Activated CD4-positive, alpha-beta T cell treated with anti-CD3 and anti-CD28 coated beads for 36 hours (primary cell): ENCODE measurements at regions of chr1 and their contacts with region 1.

Region 1: GRCh38 chr1:160251687-160252526 is 10.4 kb downstream of the DCAF8 start:
- DNase-seq: peak; percentile 74
- ATAC-seq: peak; percentile 93
- H3K4me3 Mint-ChIP-seq: no peak overlapping the region
- H3K27ac Mint-ChIP-seq: no peak overlapping the region
- H3K4me1 Mint-ChIP-seq: peaks cover 14% of the 10 kb centered on the region
- H3K27me3 Mint-ChIP-seq: no peaks in the 10 kb centered on the region

Region 2: DNA sequence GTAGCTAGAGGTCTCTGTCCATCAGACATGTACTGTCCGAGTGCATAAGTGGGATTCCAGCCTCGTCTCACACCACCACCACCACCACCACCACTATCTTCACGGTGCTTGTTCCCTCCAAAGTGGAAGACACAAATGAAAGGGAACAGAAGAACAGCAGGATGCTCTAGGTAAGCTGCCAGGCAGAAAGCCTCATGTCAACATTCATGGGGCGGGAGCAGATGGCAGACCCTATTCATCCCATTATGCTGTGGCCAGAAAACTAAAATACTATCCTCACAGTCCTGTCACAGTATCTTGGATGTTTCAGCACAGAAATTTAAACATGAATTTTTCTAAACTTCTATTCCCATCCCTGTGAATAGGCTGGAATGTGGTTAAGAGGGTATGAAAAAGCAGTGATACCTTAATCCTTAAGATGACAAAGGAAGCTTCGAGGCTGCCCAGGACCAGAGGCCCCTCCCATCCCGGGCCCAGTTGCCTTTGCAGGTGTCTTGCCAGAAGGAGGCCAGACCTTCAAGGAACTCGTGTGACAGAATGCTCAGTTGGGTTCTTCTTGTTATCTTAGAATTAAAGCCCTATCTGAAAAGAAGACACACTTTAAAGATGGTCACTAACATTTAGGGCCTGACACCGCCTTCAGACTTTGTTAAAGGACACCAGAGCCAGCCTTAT is 639.6 kb before region 1 on chr1:
- CTCF ChIA-PET with region 1: no interaction called
- POLR2A ChIA-PET with region 1: no interaction called
- intact Hi-C with region 1: no loop called
- DNase-seq: no peak
- ATAC-seq: no peak
- H3K4me3 Mint-ChIP-seq: no peak overlapping the region
- H3K27ac Mint-ChIP-seq: no peak overlapping the region
- H3K4me1 Mint-ChIP-seq: no peaks in the 10 kb centered on the region
- H3K27me3 Mint-ChIP-seq: peaks cover 18% of the 10 kb centered on the region

Region 3: GRCh38 chr1:160085686-160086455 is 166.0 kb before region 1 on chr1:
- CTCF ChIA-PET with region 1: interaction called, 13 read pairs
- POLR2A ChIA-PET with region 1: no interaction called
- intact Hi-C with region 1: no loop called
- DNase-seq: peak; percentile 91
- ATAC-seq: peak; percentile 76
- H3K4me3 Mint-ChIP-seq: no peak overlapping the region
- H3K27ac Mint-ChIP-seq: no peak overlapping the region
- H3K4me1 Mint-ChIP-seq: peaks cover 12% of the 10 kb centered on the region
- H3K27me3 Mint-ChIP-seq: peaks cover 20% of the 10 kb centered on the region

Region 4: GRCh38 chr1:160193091-160193819 is 58.7 kb before region 1 on chr1:
- CTCF ChIA-PET with region 1: interaction called, 12 read pairs
- POLR2A ChIA-PET with region 1: no interaction called
- intact Hi-C with region 1: loop called (anchors 1 kb)
- DNase-seq: peak; percentile 90
- ATAC-seq: peak; percentile 89
- H3K4me3 Mint-ChIP-seq: no peak overlapping the region
- H3K27ac Mint-ChIP-seq: no peak overlapping the region
- H3K4me1 Mint-ChIP-seq: no peaks in the 10 kb centered on the region
- H3K27me3 Mint-ChIP-seq: no peaks in the 10 kb centered on the region

Region 5: DNA sequence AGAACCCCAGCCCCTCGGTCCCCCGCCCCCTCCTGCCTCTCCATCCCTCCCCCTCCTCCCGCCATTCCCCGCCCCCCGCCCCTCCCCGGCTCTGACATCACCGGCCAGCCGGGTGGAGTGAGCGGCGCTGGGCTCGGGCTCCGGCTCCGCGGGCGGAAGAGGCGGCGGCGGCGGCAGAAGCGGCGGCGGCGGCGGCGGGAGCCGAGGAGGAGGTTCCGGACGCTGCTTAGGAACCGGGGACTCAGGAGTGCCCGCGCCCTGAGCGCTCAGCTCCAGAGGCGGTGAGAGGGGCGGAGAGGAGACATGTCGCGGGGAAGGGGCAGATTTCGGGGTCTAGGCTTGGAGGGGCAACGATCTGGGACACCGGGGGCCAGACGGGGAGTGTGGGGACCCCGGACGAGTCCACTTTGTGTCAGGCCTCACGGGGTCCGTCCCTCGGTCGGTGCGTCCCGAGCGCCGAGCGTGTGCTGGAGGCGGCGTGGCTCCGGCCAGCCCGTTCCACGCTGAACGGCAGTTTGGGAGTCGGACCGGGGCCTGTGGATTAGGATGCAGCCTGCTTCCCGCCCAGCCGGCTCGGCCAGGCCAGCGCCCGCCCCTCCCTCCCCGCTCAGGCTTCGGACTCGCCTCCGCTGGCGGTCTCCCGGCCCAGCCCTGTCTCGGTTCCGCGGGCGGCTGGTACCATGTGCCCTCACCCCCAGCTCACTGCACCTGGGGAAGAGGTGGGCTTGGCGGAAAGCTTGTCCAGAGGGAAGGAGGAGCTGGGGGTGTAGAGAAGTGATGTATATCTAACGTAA is 46.5 kb before region 1 on chr1 and contains the start of gene PEA15:
- CTCF ChIA-PET with region 1: interaction called, 16 read pairs
- POLR2A ChIA-PET with region 1: no interaction called
- intact Hi-C with region 1: no loop called
- DNase-seq: peak; percentile 83
- ATAC-seq: peak; percentile 76
- H3K4me3 Mint-ChIP-seq: peak within 1 kb of the TSS; percentile 81
- H3K27ac Mint-ChIP-seq: peak within 1 kb of the TSS; percentile 86
- H3K4me1 Mint-ChIP-seq: peaks cover 47% of the 10 kb centered on the region
- H3K27me3 Mint-ChIP-seq: no peaks in the 10 kb centered on the region
- total RNA-seq, gene PEA15: 42.5 to 63.4 TPM

Region 6: GRCh38 chr1:160232911-160233310 is 19.0 kb before region 1 on chr1:
- CTCF ChIA-PET with region 1: interaction called, 23 read pairs
- POLR2A ChIA-PET with region 1: interaction called, 3 read pairs
- intact Hi-C with region 1: no loop called
- DNase-seq: no peak
- ATAC-seq: no peak
- H3K4me3 Mint-ChIP-seq: no peak overlapping the region
- H3K27ac Mint-ChIP-seq: no peak overlapping the region
- H3K4me1 Mint-ChIP-seq: peaks cover 9% of the 10 kb centered on the region
- H3K27me3 Mint-ChIP-seq: no peaks in the 10 kb centered on the region

Region 7: GRCh38 chr1:160284782-160285344 is 33.0 kb after region 1 on chr1 and contains the start of gene PEX19:
- CTCF ChIA-PET with region 1: interaction called, 11 read pairs
- POLR2A ChIA-PET with region 1: no interaction called
- intact Hi-C with region 1: no loop called
- DNase-seq: peak; percentile 97
- ATAC-seq: peak; percentile 99
- H3K4me3 Mint-ChIP-seq: peak within 1 kb of the TSS; percentile 86
- H3K27ac Mint-ChIP-seq: peak within 1 kb of the TSS; percentile 94
- H3K4me1 Mint-ChIP-seq: peaks cover 18% of the 10 kb centered on the region
- H3K27me3 Mint-ChIP-seq: no peaks in the 10 kb centered on the region
- total RNA-seq, gene PEX19: 49.2 to 55.8 TPM